Left ventricle myocardium inferior (tissue), 1 donor: ENCODE measurements at regions of chr9 and their contacts with region 1.

Region 1: DNA sequence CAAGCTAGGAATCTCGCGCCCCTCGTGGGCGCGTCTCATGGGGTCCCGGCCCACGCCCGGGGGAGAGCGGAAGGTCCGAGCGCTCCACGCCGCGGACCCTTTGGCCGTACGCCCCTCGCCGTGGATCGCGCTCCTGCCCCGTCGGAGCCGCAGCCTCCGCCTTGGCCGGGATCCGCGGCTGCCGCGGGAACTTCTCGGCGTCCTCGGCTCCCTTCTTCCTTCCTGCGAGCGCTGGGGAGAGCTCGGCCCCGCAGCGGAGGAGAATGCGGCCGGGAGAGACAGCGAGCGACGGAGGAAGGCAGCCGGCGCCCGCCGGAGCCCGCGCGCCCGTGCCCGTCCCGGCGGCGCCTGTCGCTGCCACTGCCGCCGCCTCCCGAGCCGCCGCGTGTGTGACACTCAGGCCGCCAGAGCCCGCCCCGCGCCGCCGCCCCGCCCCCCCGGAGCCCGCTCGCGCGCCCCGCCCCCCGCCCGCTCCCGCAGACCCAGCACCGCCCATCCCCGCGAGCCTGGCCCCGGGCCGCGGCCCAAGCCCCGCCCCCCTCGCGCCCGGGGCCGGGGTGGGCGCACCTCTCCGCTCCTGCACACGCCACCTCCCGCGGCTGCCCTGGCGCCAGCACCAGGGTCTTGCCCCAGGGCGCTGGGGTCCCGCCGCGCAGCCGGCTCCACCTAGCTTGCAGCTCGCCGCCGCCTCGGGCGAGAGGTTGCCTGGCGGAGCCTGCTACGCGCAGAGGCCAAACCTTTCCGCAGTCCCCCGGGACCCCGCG is at the start of gene SHB:
- DNase-seq: peak; percentile 90
- H3K4me3 ChIP-seq: peak within 1 kb of the TSS; percentile 94
- H3K27ac ChIP-seq: peak within 1 kb of the TSS; percentile 100
- H3K4me1 ChIP-seq: peaks cover 68% of the 10 kb centered on the region
- H3K27me3 ChIP-seq: no peaks in the 10 kb centered on the region
- CTCF ChIP-seq: peak; percentile 68
- total RNA-seq, gene SHB: 19.4 TPM

Region 2: DNA sequence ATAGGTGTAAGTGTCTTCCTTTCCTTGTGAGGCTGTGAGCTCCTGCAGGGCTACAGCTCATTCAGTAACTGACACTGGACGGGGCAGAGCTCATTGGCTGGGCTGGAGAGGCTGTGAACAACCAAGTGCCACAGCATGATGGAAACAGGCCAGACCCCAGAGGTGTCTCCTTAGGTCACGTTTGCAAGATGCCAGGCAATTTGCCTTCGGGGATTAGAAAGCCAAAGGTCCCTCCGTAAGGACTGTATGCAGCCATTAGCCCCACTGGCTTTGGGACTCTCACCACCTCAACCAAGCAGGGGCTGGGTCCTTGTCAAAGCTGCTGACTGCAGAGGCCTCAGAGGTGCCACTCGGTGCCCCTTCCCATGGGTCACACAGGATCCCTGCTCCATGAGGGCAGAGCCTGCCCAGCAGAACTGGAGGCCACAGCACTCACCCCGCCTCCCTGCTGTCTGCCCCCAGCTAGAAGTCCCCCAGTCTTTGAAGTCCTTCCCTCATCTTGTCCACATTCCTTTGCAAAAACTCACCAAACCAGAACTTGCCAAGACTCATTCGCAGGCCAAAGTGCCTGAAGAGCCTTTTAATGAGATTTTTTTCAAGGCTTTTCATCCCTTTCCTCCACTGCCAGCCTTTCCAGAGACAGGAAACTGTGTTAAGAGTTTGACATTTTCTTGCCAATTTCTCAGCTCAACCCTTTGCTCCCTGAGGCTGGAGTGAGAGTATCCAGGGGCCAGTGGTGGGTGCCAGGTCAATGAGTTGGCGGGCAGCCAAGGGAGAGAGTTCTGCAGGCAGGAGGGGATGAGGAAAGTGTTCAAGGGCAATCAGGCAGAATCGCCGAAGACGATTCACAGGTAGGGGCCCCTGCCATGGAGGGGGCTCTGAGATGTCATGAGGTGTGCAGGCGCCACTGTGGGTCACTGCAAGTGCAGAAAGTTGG is 125.5 kb before region 1 on chr9:
- intact Hi-C with region 1: loop called (anchors 10 kb)
- DNase-seq: no peak
- H3K4me3 ChIP-seq: no peak overlapping the region
- H3K27ac ChIP-seq: peak overlapping the region; percentile 30
- H3K4me1 ChIP-seq: peaks cover 77% of the 10 kb centered on the region
- H3K27me3 ChIP-seq: no peaks in the 10 kb centered on the region
- CTCF ChIP-seq: no peak

Region 3: DNA sequence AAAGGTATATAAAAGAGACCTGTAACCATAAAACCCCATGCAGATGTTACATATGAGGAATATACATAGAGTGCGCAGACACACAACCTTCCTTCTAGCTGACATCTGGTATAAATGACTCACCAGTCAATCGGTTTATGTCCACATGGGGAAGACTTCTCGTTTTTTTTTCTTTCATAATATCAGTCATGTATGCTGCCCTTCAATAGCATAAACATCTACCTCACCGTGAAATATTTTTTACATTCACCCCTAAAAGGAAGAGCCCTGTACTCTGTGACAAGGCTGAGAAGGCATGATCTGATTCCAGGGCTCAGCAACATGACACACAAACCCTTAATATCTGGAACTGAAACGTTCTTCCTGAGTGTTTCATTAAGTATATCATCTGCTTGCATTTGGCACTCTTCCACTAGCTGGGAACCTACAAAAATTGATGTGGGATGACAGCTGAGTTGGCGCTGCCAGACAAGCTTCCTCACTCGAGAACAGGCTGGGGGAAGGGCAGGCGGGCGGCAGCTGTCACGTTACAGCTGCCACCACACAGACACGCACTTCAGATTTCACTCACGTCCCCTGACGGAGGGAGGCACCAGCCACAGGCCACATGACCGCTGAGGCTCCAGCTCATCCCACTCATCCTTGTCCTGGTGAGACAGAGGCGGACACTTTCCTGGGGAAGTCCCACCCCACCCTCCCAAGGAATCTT is 74.3 kb before region 1 on chr9:
- intact Hi-C with region 1: loop called (anchors 5 kb)
- DNase-seq: peak; percentile 83
- H3K4me3 ChIP-seq: peak overlapping the region; percentile 26
- H3K27ac ChIP-seq: peak overlapping the region; percentile 47
- H3K4me1 ChIP-seq: peaks cover 91% of the 10 kb centered on the region
- H3K27me3 ChIP-seq: no peaks in the 10 kb centered on the region
- CTCF ChIP-seq: no peak